ENCODE measurements at regions of chr9 and their contacts with region 1.

Region 1: GRCh38 chr9:128034821-128035764 is 32.0 kb downstream of the NAIF1 start:
- DNase-seq: peak; percentile 45 to 91
- ATAC-seq: peak; percentile 82 to 90 (median 87)
- H3K4me3 ChIP-seq: no peak overlapping the region
- H3K4me3 Mint-ChIP-seq: no peak overlapping the region
- H3K27ac ChIP-seq: no peak overlapping the region
- H3K27ac Mint-ChIP-seq: peak overlapping the region in 1 of 2 donors; percentile 51
- H3K4me1 ChIP-seq: peaks cover 49% of the 10 kb centered on the region
- H3K4me1 Mint-ChIP-seq: peaks cover 0 to 16% of the 10 kb centered on the region in 2 donors
- H3K27me3 ChIP-seq: no peaks in the 10 kb centered on the region
- H3K27me3 Mint-ChIP-seq: no peaks in the 10 kb centered on the region
- CTCF ChIP-seq: peak; percentile 88

Region 2: DNA sequence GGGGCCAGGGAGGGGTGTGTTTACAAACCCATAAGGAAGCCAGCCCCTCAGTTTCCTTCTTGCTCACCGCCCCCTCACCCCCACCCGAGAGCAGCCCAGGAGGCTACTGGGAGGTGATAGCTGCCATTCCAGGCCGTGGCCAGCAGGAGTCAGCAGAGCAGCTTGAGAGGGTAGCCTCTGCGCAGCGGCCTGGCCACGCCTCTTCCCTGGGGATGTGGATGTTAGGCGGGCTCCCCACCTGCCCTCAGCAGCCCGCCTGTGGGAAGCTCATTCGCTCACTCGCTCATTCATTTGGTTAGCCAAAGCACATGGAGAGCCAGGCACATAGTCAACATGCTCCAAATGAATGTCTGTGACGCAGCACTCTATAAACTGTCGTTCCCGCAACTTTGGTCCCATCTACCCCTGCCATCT is 91.4 kb before region 1 on chr9:
- intact Hi-C with region 1: loop called (anchors 1 kb)
- DNase-seq: peak; percentile 66 to 88
- ATAC-seq: peak; percentile 79 to 93 (median 88)
- H3K4me3 ChIP-seq: no peak overlapping the region
- H3K4me3 Mint-ChIP-seq: no peak overlapping the region
- H3K27ac ChIP-seq: no peak overlapping the region
- H3K27ac Mint-ChIP-seq: no peak overlapping the region
- H3K4me1 ChIP-seq: peaks cover 16% of the 10 kb centered on the region
- H3K4me1 Mint-ChIP-seq: peaks cover 0 to 14% of the 10 kb centered on the region in 2 donors
- H3K27me3 ChIP-seq: no peaks in the 10 kb centered on the region
- H3K27me3 Mint-ChIP-seq: no peaks in the 10 kb centered on the region
- CTCF ChIP-seq: peak; percentile 73

Region 3: DNA sequence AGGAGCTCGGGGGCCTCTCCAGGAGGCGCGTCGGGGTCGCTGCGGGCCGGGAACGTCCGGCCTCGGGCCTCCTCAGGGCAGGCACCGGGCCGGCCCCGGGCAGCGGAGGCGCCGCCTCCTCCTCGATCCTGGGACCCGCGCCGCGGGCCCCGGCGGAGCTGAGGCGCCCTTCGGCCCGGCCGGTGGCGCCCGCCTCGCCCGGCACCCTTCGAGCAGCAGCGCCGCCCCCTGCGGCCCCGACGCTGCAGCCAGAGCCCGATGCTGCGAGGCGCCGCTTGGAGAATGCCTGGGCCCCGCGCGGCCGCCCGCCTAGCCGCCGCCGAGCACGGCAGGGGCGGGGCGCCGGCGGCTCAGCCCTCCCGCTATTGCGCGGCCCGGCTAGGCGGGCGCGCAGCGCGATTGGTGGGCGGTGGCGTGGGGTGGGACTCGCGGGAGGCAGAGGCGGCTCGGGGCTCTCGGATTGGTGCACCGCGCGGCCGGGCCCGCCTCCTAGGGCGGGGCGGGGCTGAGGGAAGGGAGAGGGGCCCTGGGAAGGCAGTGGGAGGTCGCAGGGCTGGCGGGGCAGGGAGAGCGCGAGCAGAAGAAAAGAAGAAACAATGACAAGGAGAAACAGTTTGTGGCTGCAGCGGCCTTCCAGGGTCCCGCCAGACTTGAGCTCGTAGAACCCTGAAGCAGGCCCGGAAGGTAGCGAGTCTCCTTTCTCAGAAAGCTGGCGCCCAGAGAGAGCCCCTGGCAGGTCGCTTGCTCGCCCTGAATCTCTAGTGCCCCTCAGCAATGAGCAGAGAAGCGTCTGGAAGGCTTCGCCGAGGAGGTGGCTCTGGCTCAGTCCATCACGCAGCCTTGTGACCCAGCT is 54.2 kb before region 1 on chr9 and contains the start of gene EEIG1:
- intact Hi-C with region 1: loop called (anchors 2 kb)
- DNase-seq: peak; percentile 97
- ATAC-seq: peak; percentile 96 to 100 (median 97)
- H3K4me3 ChIP-seq: peak within 1 kb of the TSS; percentile 60
- H3K4me3 Mint-ChIP-seq: peak within 1 kb of the TSS; percentile 87
- H3K27ac ChIP-seq: peak within 1 kb of the TSS; percentile 62
- H3K27ac Mint-ChIP-seq: peak within 1 kb of the TSS; percentile 59 to 91
- H3K4me1 ChIP-seq: peaks cover 69% of the 10 kb centered on the region
- H3K4me1 Mint-ChIP-seq: peaks cover 5 to 22% of the 10 kb centered on the region in 2 donors
- H3K27me3 ChIP-seq: no peaks in the 10 kb centered on the region
- H3K27me3 Mint-ChIP-seq: no peaks in the 10 kb centered on the region
- CTCF ChIP-seq: no peak
- total RNA-seq, gene EEIG1: 10.3 to 36.0 (median 28.2) TPM

Region 4: DNA sequence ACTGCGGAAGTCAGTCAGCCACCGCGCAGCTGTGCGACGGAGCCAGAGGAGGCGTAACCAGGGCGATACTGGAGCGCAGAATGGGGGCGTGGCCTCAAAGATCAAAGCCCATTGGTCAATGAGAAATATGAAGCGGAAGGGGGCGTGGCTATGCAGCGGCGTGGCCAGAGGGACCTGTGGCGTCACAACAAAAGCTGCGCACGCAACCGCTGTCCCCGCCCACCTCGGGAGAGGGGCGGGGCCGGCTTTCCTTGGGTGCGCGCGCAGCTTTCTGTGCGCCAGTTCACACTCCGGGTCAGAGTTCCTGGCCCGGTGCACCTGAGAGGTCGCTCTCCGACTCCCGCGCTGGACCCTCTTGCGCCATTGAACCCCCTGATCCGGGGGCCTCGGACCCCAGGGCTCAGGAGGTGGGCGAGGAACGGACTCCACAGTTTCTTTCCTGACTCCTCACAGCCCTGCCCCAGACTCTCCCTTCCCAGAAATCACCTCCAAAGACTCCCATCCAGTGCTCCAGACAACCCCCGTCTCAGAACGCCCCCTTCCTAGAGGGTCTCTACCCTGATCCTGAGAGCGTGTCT is 241.0 kb after region 1 on chr9 and contains the starts of genes GOLGA2 and SWI5:
- intact Hi-C with region 1: no loop called
- DNase-seq: peak; percentile 99 to 100
- ATAC-seq: peak; percentile 92 to 99 (median 93)
- H3K4me3 ChIP-seq: peak within 1 kb of the TSS; percentile 71
- H3K4me3 Mint-ChIP-seq: peak within 1 kb of the TSS; percentile 92
- H3K27ac ChIP-seq: peak within 1 kb of the TSS; percentile 80
- H3K27ac Mint-ChIP-seq: peak within 1 kb of the TSS; percentile 91 to 99
- H3K4me1 ChIP-seq: peaks cover 23% of the 10 kb centered on the region
- H3K4me1 Mint-ChIP-seq: peaks cover 21 to 33% of the 10 kb centered on the region in 2 donors
- H3K27me3 ChIP-seq: no peaks in the 10 kb centered on the region
- H3K27me3 Mint-ChIP-seq: peaks cover 0 to 2% of the 10 kb centered on the region in 2 donors
- CTCF ChIP-seq: no peak
- total RNA-seq, gene GOLGA2: 78.0 to 101 (median 90.9) TPM
- total RNA-seq, gene SWI5: 6.3 to 9.3 (median 8.4) TPM

Measured in natural killer cell (primary cell).